Esophagus muscularis mucosa (tissue), 4 donors: ENCODE measurements at regions of chr15 and their contacts with region 1.

Region 1: DNA sequence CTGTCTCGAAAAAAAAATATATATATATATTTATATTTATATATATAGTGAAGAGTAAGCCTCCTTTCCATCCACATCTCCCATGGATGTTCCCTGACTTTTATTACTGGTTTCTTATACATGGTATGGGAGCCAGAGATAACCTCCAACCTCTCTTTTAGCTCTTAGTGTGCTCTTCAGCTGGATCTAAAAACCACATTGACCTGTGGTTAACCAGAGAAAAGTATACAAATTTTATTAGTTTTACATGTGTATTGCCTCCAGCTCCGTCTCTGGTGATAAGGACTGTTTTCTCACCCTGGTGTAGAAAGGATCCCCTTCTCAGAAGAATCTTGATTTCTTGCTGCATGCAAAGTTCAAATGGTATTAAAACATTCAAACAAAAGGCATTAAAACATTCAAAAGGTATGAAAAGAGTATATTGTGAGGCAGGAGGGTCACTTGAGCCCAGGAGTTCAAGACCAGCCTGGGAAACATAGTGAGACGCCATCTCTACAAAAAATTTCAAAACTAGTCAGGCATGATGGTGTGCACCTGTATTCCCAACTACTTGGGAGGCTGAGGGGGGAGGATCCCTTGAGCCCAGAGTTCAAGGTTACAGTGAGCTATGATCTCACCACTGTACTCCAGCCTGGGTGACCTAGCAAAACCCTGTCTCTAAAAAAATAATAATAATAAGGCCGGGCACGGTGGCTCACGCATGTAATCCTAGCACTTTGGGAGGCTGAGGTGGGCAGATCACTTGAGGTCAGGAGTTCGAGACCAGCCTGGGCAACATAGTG is 13.5 kb upstream of the TTBK2 start:
- DNase-seq: no peak
- H3K4me3 ChIP-seq: no peak overlapping the region
- H3K27ac ChIP-seq: no peak overlapping the region
- H3K4me1 ChIP-seq: peaks cover 0 to 3% (median 0%) of the 10 kb centered on the region in 4 donors
- H3K27me3 ChIP-seq: no peaks in the 10 kb centered on the region
- CTCF ChIP-seq: no peak
- EP300 ChIP-seq: no peak
- POLR2A ChIP-seq: no peak

Region 2: GRCh38 chr15:42863572-42864239 is 70.4 kb before region 1 on chr15:
- intact Hi-C with region 1: loop called (anchors 10 kb)
- DNase-seq: no peak
- H3K4me3 ChIP-seq: no peak overlapping the region
- H3K27ac ChIP-seq: no peak overlapping the region
- H3K4me1 ChIP-seq: peaks cover 6 to 30% (median 13%) of the 10 kb centered on the region in 4 donors
- H3K27me3 ChIP-seq: no peaks in the 10 kb centered on the region
- CTCF ChIP-seq: no peak
- EP300 ChIP-seq: no peak
- POLR2A ChIP-seq: no peak

Region 3: DNA sequence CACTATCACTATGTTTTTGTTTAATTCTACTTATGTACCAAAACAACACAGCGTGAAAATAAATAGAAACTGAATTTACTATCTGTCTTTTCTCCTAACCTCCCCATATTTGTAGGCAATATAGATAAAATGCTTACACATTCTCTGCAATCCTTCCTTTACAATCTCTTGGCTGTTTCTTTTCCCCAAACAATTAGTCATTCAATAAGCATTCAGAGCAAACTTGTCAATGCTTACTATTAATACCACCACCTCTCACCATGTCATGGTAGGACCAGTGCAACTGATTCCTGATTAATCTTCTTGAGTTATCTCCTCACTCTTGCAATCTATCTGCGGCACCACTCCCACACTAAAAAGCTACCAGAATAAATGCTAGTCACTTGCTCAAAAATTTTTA is 60.5 kb after region 1 on chr15:
- intact Hi-C with region 1: loop called (anchors 10 kb)
- DNase-seq: no peak
- H3K4me3 ChIP-seq: no peak overlapping the region
- H3K27ac ChIP-seq: no peak overlapping the region
- H3K4me1 ChIP-seq: peaks cover 6 to 18% (median 12%) of the 10 kb centered on the region in 4 donors
- H3K27me3 ChIP-seq: no peaks in the 10 kb centered on the region
- CTCF ChIP-seq: no peak
- EP300 ChIP-seq: no peak
- POLR2A ChIP-seq: no peak

Region 4: DNA sequence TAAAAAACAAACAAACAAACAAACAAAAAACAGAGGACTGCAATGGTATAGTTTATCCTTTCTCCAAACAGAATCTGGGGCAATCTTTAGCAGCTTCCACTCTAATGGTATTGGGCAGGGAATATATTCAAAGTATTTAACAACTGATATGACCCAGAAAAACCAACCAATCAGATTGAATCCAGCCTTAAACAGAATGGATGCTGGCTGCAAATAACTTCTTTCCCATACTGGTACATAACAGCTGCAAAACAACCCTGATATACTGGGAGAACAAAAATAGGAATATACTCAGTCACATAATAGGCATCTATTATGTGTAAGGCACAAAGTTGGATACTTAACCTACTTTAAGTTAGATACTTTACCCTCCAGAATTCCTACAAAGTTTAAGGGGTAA is 122.6 kb after region 1 on chr15:
- intact Hi-C with region 1: no loop called
- DNase-seq: no peak
- H3K4me3 ChIP-seq: no peak overlapping the region
- H3K27ac ChIP-seq: no peak overlapping the region
- H3K4me1 ChIP-seq: no peaks in the 10 kb centered on the region
- H3K27me3 ChIP-seq: no peaks in the 10 kb centered on the region
- CTCF ChIP-seq: no peak
- EP300 ChIP-seq: no peak
- POLR2A ChIP-seq: no peak